Panc1 (cell line): ENCODE measurements at regions of chr11 and their contacts with region 1.

Region 1: DNA sequence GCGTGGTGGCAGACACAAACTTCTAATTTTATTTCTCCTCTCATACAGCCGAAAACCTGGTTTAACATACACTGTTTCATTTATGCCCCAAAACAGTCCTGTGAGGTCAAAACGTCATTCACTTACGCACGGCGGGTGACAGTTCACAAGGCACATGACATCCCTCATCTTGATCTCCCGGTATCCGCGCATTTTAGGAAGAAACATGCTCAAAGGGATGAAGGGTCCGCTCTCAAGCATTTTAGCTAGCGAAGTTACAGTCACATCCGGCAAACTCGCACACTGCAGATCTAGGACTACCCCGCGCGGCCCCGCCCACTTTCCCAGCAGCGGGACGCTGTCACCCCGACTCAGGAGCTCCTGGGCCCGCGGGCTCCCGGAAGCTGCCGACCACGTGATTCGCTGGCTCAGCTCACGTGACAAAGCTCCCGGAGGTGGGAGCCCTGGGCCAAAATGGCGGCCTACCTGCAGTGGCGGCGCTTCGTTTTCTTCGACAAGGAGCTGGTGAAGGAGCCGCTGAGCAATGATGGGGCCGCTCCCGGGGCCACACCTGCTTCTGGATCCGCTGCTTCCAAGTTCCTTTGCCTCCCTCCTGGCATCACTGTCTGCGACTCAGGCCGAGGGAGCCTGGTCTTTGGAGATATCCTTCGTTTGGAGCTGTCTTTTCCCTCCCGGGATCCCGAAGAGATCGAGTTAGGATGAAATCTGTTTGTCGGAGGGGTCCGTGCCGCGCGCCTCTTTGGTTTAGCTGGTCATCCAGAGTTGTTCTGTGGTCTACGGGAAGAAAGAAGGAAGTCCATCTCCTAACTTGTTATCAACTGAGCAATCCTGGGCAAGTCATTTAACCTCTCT is at the start of gene VPS11:
- DNase-seq: peak; percentile 82
- ATAC-seq: peak; percentile 99
- H3K4me3 ChIP-seq: peak within 1 kb of the TSS; percentile 73 to 97
- H3K27ac ChIP-seq: peak within 1 kb of the TSS; percentile 88
- H3K4me1 ChIP-seq: peaks cover 8% of the 10 kb centered on the region; the same call in 1 of the 2 replicates
- H3K27me3 ChIP-seq: no peaks in the 10 kb centered on the region
- CTCF ChIP-seq: no peak
- total RNA-seq, gene VPS11: 28.2 TPM

Region 2: DNA sequence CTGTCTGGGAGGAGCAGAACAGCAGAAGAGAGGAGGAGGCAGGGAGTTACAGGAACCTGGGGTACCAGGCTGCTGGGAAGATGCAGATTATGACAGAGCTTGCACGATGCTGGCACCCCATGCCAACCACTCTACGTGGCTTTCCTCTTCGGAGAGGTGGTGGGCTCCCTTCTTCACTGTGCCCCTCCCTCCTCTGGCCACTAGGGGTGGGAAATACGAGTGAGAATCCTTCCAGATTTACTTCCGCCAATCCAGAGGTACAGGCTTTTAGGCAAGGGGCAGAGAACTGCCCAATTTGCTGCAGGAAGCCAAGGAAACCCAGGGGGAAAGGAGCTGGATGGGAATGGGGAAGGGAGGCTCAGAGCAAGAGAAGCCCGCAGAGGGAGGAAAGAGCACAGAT is 22.9 kb before region 1 on chr11:
- CTCF ChIA-PET with region 1: no interaction called
- POLR2A ChIA-PET with region 1: no interaction called
- in situ Hi-C with region 1: no loop called
- intact Hi-C with region 1: no loop called
- DNase-seq: no peak
- ATAC-seq: no peak
- H3K4me3 ChIP-seq: no peak overlapping the region
- H3K27ac ChIP-seq: no peak overlapping the region
- H3K4me1 ChIP-seq: no peaks in the 10 kb centered on the region
- H3K27me3 ChIP-seq: no peaks in the 10 kb centered on the region
- CTCF ChIP-seq: no peak

Region 3: DNA sequence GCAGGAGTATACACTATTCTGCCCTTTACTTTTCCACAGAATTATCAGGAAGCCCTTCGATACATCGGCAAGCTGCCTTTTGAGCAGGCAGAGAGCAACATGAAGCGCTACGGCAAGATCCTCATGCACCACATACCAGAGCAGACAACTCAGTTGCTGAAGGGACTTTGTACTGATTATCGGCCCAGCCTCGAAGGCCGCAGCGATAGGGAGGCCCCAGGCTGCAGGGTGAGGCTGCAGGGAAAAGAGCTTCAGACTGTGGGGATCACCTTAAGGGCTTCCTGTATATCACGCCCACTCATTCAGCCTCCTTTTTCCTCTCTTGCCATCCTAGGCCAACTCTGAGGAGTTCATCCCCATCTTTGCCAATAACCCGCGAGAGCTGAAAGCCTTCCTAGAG is 10.2 kb after region 1 on chr11:
- CTCF ChIA-PET with region 1: interaction called, 10 read pairs
- POLR2A ChIA-PET with region 1: no interaction called
- in situ Hi-C with region 1: no loop called
- intact Hi-C with region 1: no loop called
- DNase-seq: no peak
- ATAC-seq: no peak
- H3K4me3 ChIP-seq: no peak overlapping the region
- H3K27ac ChIP-seq: no peak overlapping the region
- H3K4me1 ChIP-seq: no peaks in the 10 kb centered on the region
- H3K27me3 ChIP-seq: no peaks in the 10 kb centered on the region
- CTCF ChIP-seq: no peak

Region 4: GRCh38 chr11:119169282-119169719 is 101.7 kb after region 1 on chr11:
- CTCF ChIA-PET with region 1: no interaction called
- POLR2A ChIA-PET with region 1: no interaction called
- in situ Hi-C with region 1: no loop called
- intact Hi-C with region 1: no loop called
- DNase-seq: no peak
- ATAC-seq: peak; percentile 64
- H3K4me3 ChIP-seq: peak overlapping the region; percentile 58 to 88
- H3K27ac ChIP-seq: peak overlapping the region; percentile 80
- H3K4me1 ChIP-seq: peaks cover 14% of the 10 kb centered on the region
- H3K27me3 ChIP-seq: no peaks in the 10 kb centered on the region
- CTCF ChIP-seq: no peak